K562 (cell line): ENCODE measurements at regions of chr22 and their contacts with region 1.

Region 1: GRCh38 chr22:19745155-19746101 is 15.2 kb upstream of the TBX1 start:
- DNase-seq: peak in 1 of 4 experiments; percentile 56
- ATAC-seq: peak; percentile 17
- H3K4me3 ChIP-seq: no peak overlapping the region
- H3K27ac ChIP-seq: no peak overlapping the region
- H3K4me1 ChIP-seq: peaks cover 5 to 68% of the 10 kb centered on the region in 2 experiments
- H3K27me3 ChIP-seq: peaks cover 20 to 61% of the 10 kb centered on the region in 2 experiments; a peak in 4 of 5 replicates
- CTCF ChIP-seq: no peak
- EP300 ChIP-seq: no peak
- POLR2A ChIP-seq: no peak
- RAD21 ChIP-seq: no peak

Region 2: DNA sequence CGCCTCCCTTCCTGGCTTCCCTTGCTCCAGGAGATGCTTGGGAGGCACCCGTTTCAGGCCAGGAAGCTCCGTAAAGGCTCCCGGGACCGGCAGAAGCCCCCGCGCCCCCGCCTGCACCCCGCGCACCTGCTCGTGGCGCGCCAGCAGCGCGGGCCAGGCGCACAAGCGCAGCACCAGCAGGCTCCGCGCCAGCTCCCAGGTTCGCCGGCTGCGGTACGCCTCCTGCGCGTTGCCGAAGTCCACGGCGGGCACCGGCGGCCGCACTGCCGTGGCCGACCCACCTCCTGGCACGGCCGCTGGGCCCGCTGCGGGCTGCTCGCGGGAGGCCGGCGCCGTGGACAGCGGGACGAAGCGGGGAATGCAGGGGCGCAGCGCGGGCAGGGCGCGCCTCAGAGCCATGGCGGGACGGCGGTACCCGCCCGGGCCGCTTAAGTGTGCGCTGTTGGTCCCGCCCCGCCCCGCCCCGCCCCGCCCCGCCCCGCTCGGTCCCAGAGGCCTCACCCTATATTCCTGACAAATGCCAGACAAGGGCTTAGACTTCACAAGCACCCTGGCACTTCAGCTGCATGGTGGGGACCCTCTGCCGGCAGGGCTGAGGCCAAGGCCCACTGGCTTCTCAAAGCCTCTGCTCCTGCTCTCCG is 809.4 kb before region 1 on chr22 and contains the start of gene PRODH:
- CTCF ChIA-PET with region 1: no interaction called
- POLR2A ChIA-PET with region 1: no interaction called
- in situ Hi-C with region 1: no loop called
- intact Hi-C with region 1: no loop called
- DNase-seq: no peak
- ATAC-seq: peak; percentile 81
- H3K4me3 ChIP-seq: no peak within 1 kb of the TSS
- H3K27ac ChIP-seq: no peak within 1 kb of the TSS
- H3K4me1 ChIP-seq: no peaks in the 10 kb centered on the region
- H3K27me3 ChIP-seq: no peaks in the 10 kb centered on the region
- CTCF ChIP-seq: no peak
- EP300 ChIP-seq: no peak
- POLR2A ChIP-seq: no peak
- RAD21 ChIP-seq: no peak
- polyA plus RNA-seq, gene PRODH: not detected

Region 3: DNA sequence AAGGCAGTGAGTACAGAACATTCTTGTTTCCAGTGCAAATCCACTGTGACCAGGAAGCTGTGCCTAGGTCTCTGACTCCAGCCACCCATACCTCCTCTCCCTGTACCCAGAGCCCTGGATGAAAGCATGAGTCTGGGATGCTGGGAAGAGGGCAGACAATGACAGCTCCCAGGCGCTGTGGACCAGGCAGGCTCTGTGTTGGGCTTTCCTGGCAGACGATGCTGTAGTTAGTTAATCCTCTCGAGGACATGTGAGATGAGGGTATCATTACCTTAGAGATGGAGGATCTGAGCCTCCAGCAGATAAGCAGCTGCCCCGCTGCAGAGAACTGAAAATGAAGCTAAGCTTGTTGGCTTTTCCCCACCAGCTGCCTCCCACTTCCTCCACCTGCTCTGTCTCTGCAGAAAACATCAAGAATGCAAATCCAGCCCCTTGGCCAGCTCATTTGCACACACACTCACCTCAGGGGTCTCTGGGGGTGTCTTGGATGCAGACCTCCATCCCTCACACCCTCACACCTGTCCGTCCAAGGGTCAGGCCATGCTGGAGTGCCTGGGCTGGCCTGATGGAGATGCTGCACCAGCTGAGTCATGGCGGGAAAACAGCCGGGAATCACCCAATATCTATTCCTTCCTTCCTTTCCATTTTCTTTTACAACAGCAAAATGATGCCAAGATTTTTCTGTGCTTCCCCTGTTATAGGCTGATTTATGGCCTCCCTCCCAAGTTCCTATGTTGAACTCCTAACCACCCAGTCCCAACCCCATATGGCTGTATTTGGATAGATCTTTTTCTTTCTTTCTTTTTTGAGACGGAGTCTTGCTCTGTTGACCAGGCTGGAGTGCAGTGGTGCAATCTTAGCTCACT is 126.1 kb before region 1 on chr22:
- CTCF ChIA-PET with region 1: no interaction called
- POLR2A ChIA-PET with region 1: no interaction called
- in situ Hi-C with region 1: no loop called
- intact Hi-C with region 1: no loop called
- DNase-seq: no peak
- ATAC-seq: no peak
- H3K4me3 ChIP-seq: no peak overlapping the region
- H3K27ac ChIP-seq: no peak overlapping the region
- H3K4me1 ChIP-seq: peaks cover 0 to 7% of the 10 kb centered on the region in 2 experiments; a peak in 2 of 5 replicates
- H3K27me3 ChIP-seq: peaks cover 84 to 92% of the 10 kb centered on the region in 2 experiments
- CTCF ChIP-seq: no peak
- EP300 ChIP-seq: no peak
- POLR2A ChIP-seq: no peak
- RAD21 ChIP-seq: no peak

Region 4: GRCh38 chr22:19723983-19724827 is 21.2 kb before region 1 on chr22:
- CTCF ChIA-PET with region 1: no interaction called
- POLR2A ChIA-PET with region 1: interaction called, 20 read pairs
- in situ Hi-C with region 1: no loop called
- intact Hi-C with region 1: no loop called
- DNase-seq: peak; percentile 94 to 97 (median 94)
- ATAC-seq: peak; percentile 70
- H3K4me3 ChIP-seq: peak overlapping the region; percentile 55
- H3K27ac ChIP-seq: peak overlapping the region; percentile 88
- H3K4me1 ChIP-seq: peaks cover 45 to 90% of the 10 kb centered on the region in 2 experiments
- H3K27me3 ChIP-seq: no peaks in the 10 kb centered on the region; a peak in 1 of 5 replicates
- CTCF ChIP-seq: peak; percentile 72 to 98 (median 97); a peak in 5 of 6 replicates
- EP300 ChIP-seq: peak; percentile 72
- POLR2A ChIP-seq: no peak
- RAD21 ChIP-seq: peak in 1 of 2 experiments; percentile 93; a peak in 2 of 4 replicates

Region 5: GRCh38 chr22:19761500-19762314 is 16.3 kb after region 1 on chr22:
- CTCF ChIA-PET with region 1: interaction called, 3 read pairs
- POLR2A ChIA-PET with region 1: interaction called, 14 read pairs
- in situ Hi-C with region 1: no loop called
- intact Hi-C with region 1: no loop called
- DNase-seq: peak in 3 of 4 experiments; percentile 67 to 71 (median 70)
- ATAC-seq: peak; percentile 28
- H3K4me3 ChIP-seq: peak overlapping the region; percentile 36
- H3K27ac ChIP-seq: peak overlapping the region; percentile 13; the same call in 2 of the 3 replicates
- H3K4me1 ChIP-seq: peaks cover 18 to 93% of the 10 kb centered on the region in 2 experiments; a peak in 4 of 5 replicates
- H3K27me3 ChIP-seq: peaks cover 11 to 34% of the 10 kb centered on the region in 2 experiments; a peak in 4 of 5 replicates
- CTCF ChIP-seq: no peak
- EP300 ChIP-seq: no peak
- POLR2A ChIP-seq: no peak
- RAD21 ChIP-seq: no peak

Region 6: GRCh38 chr22:19772422-19773324 is 27.2 kb after region 1 on chr22:
- CTCF ChIA-PET with region 1: no interaction called
- POLR2A ChIA-PET with region 1: interaction called, 13 read pairs
- in situ Hi-C with region 1: no loop called
- intact Hi-C with region 1: no loop called
- DNase-seq: peak; percentile 65 to 73 (median 69)
- ATAC-seq: peak; percentile 54
- H3K4me3 ChIP-seq: no peak overlapping the region
- H3K27ac ChIP-seq: peak overlapping the region; percentile 11; the same call in 1 of the 3 replicates
- H3K4me1 ChIP-seq: peaks cover 38 to 77% of the 10 kb centered on the region in 2 experiments
- H3K27me3 ChIP-seq: peaks cover 0 to 9% of the 10 kb centered on the region in 2 experiments; a peak in 2 of 5 replicates
- CTCF ChIP-seq: peak in 2 of 3 experiments; percentile 34 to 37; a peak in 2 of 6 replicates
- EP300 ChIP-seq: no peak
- POLR2A ChIP-seq: no peak
- RAD21 ChIP-seq: peak in 1 of 2 experiments; percentile 51; a peak in 2 of 4 replicates